ENCODE measurements at regions of chr21 and their contacts with region 1.

Region 1: DNA sequence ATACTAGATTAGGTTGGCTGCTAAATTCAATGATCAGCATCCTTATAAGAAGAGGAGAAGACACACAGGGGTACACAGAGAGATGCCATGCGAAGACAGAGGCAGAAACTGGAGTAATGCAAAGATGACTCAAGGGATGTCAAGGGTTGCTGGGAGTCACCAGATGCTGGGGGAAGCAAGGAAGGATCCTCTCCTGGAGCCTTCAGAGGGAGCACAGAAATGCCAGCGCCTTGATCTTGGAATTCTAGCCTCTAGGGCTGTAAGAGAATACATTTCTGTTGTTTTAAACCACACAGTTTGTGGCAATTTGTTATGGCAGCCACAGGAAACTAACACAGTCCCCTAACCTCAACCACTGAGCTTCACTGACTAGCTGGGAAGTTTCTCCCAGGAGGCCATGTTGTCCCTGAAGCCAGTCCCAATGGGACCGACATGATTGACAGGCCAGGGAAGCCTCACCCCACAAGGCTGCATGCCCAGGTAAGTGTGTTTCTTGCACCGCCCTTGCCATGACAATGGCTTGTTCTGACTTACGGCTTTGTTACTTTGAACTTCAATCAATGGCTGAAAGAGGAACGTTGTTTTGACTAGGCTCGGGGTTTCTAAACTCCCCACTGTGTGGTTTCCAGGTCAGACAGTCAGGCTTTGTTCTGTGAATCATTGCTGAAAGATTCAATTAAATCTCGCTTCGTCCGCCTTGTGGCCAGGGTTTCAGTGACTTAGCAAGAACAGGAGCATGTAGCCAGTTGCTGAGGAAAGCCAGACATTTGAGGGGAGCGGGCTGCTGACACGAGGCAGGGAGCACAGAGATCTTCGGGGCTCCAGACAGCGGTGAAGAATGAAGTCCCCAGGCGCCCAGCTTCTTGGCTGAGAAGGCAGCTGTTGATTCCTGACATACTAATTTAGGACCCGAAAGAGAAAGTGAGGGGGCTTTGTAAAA is 62.3 kb downstream of the RUNX1 start:
- DNase-seq: peak; percentile 33 to 78
- ATAC-seq: peak; percentile 32 to 64 (median 48)
- H3K4me3 ChIP-seq: no peak overlapping the region
- H3K4me3 Mint-ChIP-seq: peak overlapping the region; percentile 88
- H3K27ac ChIP-seq: peak overlapping the region; percentile 57
- H3K27ac Mint-ChIP-seq: peak overlapping the region; percentile 82 to 91
- H3K4me1 ChIP-seq: peaks cover 79% of the 10 kb centered on the region
- H3K4me1 Mint-ChIP-seq: peaks cover 90 to 95% of the 10 kb centered on the region in 2 donors
- H3K27me3 ChIP-seq: no peaks in the 10 kb centered on the region
- H3K27me3 Mint-ChIP-seq: no peaks in the 10 kb centered on the region
- CTCF ChIP-seq: no peak

Region 2: DNA sequence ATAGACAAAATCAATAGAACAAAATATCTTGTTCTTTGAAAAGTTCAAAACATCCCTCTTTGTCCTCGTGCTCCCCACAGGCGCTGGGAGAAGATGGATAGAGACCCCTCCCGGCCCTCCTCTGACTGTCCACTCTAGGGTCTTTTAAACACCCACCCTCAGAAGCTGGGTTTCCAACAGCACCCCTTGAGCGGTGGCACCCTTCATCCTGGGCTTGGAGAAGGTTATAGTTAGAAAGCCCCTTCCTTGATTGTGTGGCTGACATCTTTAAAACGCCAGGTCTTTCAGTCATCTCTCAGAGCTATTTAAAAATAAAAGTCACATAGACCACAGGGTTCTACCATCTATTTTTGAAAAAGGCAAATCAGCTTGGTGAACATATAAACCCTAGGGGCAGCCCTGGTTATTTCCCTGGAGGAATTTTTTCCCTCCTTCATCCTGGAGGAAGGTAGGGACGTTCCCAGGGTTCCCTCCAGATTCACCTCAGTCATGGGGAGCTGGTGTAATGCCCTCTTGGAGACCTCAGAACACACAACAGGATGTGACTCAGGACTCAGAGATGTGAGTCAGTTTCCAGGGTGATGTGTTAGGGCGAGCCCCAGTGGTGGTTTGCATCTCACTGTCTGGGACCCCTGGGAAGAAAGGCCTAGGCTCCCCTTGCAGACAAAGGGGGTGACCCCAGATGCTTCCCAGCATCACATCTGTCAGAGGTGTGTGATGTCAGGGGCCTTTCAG is 179.5 kb before region 1 on chr21:
- intact Hi-C with region 1: loop called (anchors 5 kb)
- DNase-seq: peak; percentile 69 to 77
- ATAC-seq: peak; percentile 80 to 92 (median 88)
- H3K4me3 ChIP-seq: no peak overlapping the region
- H3K4me3 Mint-ChIP-seq: peak overlapping the region; percentile 69
- H3K27ac ChIP-seq: peak overlapping the region; percentile 70
- H3K27ac Mint-ChIP-seq: peak overlapping the region; percentile 94 to 96
- H3K4me1 ChIP-seq: peaks cover 48% of the 10 kb centered on the region
- H3K4me1 Mint-ChIP-seq: peaks cover 86 to 89% of the 10 kb centered on the region in 2 donors
- H3K27me3 ChIP-seq: no peaks in the 10 kb centered on the region
- H3K27me3 Mint-ChIP-seq: no peaks in the 10 kb centered on the region
- CTCF ChIP-seq: no peak

Region 3: DNA sequence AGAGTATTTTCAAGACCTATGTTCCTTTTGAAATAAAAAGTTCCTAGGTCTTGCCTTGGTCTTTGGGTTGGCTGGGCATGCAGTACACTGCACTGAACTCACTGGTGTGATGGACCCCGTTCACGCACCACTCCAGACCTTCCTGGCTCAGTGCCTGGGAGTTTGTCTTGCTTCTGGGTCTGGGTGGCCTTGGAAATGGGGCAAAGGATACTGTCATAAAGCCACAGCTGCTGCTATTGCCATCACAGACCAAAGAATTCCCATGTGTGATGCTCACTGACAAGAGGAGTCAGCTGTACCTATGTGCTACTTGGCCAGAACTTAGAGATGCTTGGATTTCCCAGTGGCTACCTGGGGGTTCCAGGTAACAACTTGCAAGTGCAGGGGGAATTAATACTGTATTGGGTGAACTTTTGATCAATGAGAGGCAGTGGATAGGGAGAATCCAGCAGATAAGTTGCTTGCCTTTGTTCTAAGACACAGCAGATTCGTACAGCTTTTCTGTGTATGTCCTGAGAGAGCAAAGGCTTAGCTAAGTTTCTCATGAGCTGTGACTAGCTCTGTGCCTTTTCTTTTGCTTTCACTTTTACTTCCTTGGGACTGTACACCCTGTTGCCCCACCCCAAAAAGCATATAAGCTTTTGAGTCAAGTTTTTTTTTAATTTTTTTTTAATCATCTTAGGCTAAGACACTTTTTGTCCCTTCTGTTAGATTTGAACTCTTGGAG is 53.1 kb before region 1 on chr21:
- intact Hi-C with region 1: loop called (anchors 2 kb)
- DNase-seq: peak in 1 of 2 donors; percentile 83
- ATAC-seq: peak; percentile 88 to 93 (median 91)
- H3K4me3 ChIP-seq: peak overlapping the region; percentile 11
- H3K4me3 Mint-ChIP-seq: peak overlapping the region; percentile 78
- H3K27ac ChIP-seq: peak overlapping the region; percentile 89
- H3K27ac Mint-ChIP-seq: peak overlapping the region; percentile 93
- H3K4me1 ChIP-seq: peaks cover 29% of the 10 kb centered on the region
- H3K4me1 Mint-ChIP-seq: peaks cover 62 to 80% of the 10 kb centered on the region in 2 donors
- H3K27me3 ChIP-seq: no peaks in the 10 kb centered on the region
- H3K27me3 Mint-ChIP-seq: no peaks in the 10 kb centered on the region
- CTCF ChIP-seq: no peak

Region 4: GRCh38 chr21:34956416-34957316 is 30.2 kb before region 1 on chr21:
- intact Hi-C with region 1: no loop called
- DNase-seq: no peak
- ATAC-seq: peak in 1 of 3 donors; percentile 60
- H3K4me3 ChIP-seq: no peak overlapping the region
- H3K4me3 Mint-ChIP-seq: no peak overlapping the region
- H3K27ac ChIP-seq: no peak overlapping the region
- H3K27ac Mint-ChIP-seq: peak overlapping the region in 1 of 2 donors; percentile 34
- H3K4me1 ChIP-seq: peaks cover 6% of the 10 kb centered on the region
- H3K4me1 Mint-ChIP-seq: peaks cover 69 to 75% of the 10 kb centered on the region in 2 donors
- H3K27me3 ChIP-seq: no peaks in the 10 kb centered on the region
- H3K27me3 Mint-ChIP-seq: no peaks in the 10 kb centered on the region
- CTCF ChIP-seq: no peak